CD4-positive, alpha-beta T cell (primary cell): ENCODE measurements at regions of chr16 and their contacts with region 1.

Region 1: GRCh38 chr16:66830422-66831404 is at the start of gene NAE1:
- DNase-seq: peak; percentile 76 to 97 (median 88)
- ATAC-seq: peak; percentile 94
- H3K4me3 ChIP-seq: peak within 1 kb of the TSS; percentile 68
- H3K4me3 Mint-ChIP-seq: peak within 1 kb of the TSS; percentile 84
- H3K27ac ChIP-seq: peak within 1 kb of the TSS in 1 of 2 donors; percentile 55
- H3K27ac Mint-ChIP-seq: peak within 1 kb of the TSS; percentile 67
- H3K4me1 ChIP-seq: peaks cover 32% of the 10 kb centered on the region
- H3K4me1 Mint-ChIP-seq: peaks cover 38% of the 10 kb centered on the region
- H3K27me3 ChIP-seq: peaks cover 0 to 4% of the 10 kb centered on the region in 2 experiments
- H3K27me3 Mint-ChIP-seq: no peaks in the 10 kb centered on the region
- CTCF ChIP-seq: peak; percentile 98
- total RNA-seq, gene NAE1: 89.1 to 91.2 TPM

Region 2: GRCh38 chr16:66103211-66103610 is 727.5 kb before region 1 on chr16:
- CTCF ChIA-PET with region 1: no interaction called
- POLR2A ChIA-PET with region 1: no interaction called
- intact Hi-C with region 1: no loop called
- DNase-seq: no peak
- ATAC-seq: no peak
- H3K4me3 ChIP-seq: no peak overlapping the region
- H3K4me3 Mint-ChIP-seq: no peak overlapping the region
- H3K27ac ChIP-seq: no peak overlapping the region
- H3K27ac Mint-ChIP-seq: no peak overlapping the region
- H3K4me1 ChIP-seq: no peaks in the 10 kb centered on the region
- H3K4me1 Mint-ChIP-seq: no peaks in the 10 kb centered on the region
- H3K27me3 ChIP-seq: no peaks in the 10 kb centered on the region
- H3K27me3 Mint-ChIP-seq: peaks cover 21% of the 10 kb centered on the region
- CTCF ChIP-seq: no peak

Region 3: DNA sequence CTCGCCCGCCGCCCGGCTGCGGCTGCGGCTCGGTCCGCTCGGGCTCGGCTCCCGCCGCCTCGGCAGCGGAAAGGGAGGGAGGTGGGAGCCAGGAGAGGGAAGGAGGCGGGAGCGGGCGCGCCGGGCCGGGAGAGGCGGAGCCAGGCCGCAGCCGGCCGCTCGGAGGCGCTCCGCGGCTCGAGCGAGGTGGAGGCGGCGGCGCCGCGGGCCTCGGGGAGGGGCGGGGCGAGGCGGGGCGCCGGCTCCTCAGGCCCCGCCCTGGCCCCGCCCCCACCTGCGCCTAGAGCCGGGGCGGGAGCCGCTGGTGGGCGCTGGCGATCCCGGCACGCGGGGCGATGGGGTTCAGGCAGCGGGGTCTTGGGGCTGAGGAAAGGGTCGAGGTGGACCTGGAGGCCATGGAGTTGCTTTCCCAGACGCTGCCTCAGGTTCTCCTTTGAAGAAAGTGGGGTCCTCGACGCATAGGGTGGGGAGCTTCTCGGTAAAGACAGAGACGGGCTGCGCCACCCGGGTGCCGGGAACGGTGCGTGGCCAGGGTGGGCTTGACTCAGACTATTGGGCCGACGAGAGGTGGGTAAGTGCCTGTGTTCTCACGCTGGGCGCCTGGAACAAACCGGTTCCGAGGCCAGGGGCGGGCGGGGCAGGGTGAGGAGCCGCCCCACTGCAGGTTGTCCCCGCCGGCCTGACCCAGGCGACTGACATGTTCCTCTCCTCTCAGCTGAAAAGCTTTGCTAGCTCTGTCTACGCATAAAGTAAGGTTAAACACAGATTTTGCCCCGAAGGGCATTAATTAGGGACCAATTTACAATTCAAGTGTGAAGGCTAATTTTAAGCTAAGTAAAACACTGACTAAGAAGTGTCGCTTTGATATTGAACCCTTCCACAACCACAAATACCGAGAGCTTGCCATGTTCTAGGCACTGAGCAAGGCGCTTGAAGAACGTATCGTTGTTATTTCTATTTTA is 133.8 kb before region 1 on chr16 and contains the start of gene CMTM4:
- CTCF ChIA-PET with region 1: interaction called, 4 read pairs
- POLR2A ChIA-PET with region 1: no interaction called
- intact Hi-C with region 1: loop called in 1 of 2 experiments (anchors 2 kb)
- DNase-seq: peak; percentile 42 to 92 (median 72)
- ATAC-seq: peak; percentile 95
- H3K4me3 ChIP-seq: peak within 1 kb of the TSS; percentile 73
- H3K4me3 Mint-ChIP-seq: peak within 1 kb of the TSS; percentile 90
- H3K27ac ChIP-seq: no peak within 1 kb of the TSS
- H3K27ac Mint-ChIP-seq: peak within 1 kb of the TSS; percentile 63
- H3K4me1 ChIP-seq: peaks cover 16% of the 10 kb centered on the region
- H3K4me1 Mint-ChIP-seq: peaks cover 14% of the 10 kb centered on the region
- H3K27me3 ChIP-seq: peaks cover 0 to 4% of the 10 kb centered on the region in 2 experiments
- H3K27me3 Mint-ChIP-seq: peaks cover 4% of the 10 kb centered on the region
- CTCF ChIP-seq: no peak
- total RNA-seq, gene CMTM4: 1.1 to 1.6 TPM

Region 4: DNA sequence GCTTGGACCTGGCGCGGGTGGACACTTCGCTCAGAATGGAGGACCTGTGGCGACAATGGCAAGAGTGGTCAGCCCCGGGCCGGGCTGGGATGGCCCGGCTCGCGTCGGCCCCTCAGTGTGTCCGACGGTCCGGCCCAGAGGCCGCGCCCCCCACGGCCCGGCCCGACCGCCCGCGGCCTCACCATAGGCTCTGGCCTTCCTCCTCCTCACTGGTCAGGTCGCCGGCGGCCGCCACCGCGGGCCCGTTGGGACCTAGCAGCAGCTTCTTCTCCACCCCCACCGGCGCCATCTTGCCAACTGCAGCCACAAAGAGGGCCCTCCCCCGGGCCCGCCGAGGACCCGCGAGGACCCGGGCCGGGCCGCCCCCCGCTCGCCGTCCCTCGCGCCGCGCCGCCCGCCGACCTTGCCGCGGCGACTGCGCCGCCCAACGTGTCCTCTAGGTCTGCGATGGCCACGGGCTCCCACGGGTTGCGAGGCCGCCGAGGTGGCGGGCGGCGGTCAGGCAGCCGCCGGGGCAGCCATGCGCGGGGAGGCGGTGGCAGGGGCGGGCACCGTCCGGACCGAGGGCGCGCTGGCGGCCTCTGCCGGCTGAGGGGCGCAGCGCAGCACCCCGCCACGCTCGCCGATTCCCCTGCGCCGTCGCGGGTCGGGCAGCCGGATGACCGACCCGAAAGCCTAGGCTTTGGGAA is 79.3 kb before region 1 on chr16 and contains the start of gene DYNC1LI2:
- CTCF ChIA-PET with region 1: interaction called, 9 read pairs
- POLR2A ChIA-PET with region 1: interaction called, 13 read pairs
- intact Hi-C with region 1: loop called in 1 of 2 experiments (anchors 2 kb)
- DNase-seq: peak; percentile 66 to 92 (median 78)
- ATAC-seq: peak; percentile 94
- H3K4me3 ChIP-seq: peak within 1 kb of the TSS; percentile 81
- H3K4me3 Mint-ChIP-seq: peak within 1 kb of the TSS; percentile 94
- H3K27ac ChIP-seq: peak within 1 kb of the TSS in 1 of 2 donors; percentile 66
- H3K27ac Mint-ChIP-seq: peak within 1 kb of the TSS; percentile 91
- H3K4me1 ChIP-seq: peaks cover 32% of the 10 kb centered on the region
- H3K4me1 Mint-ChIP-seq: peaks cover 37% of the 10 kb centered on the region
- H3K27me3 ChIP-seq: no peaks in the 10 kb centered on the region
- H3K27me3 Mint-ChIP-seq: peaks cover 19% of the 10 kb centered on the region
- CTCF ChIP-seq: peak; percentile 67
- total RNA-seq, gene DYNC1LI2: 81.8 to 82.4 TPM

Region 5: GRCh38 chr16:66811043-66811442 is 19.7 kb before region 1 on chr16:
- CTCF ChIA-PET with region 1: interaction called, 10 read pairs
- POLR2A ChIA-PET with region 1: interaction called, 4 read pairs
- intact Hi-C with region 1: no loop called
- DNase-seq: no peak
- ATAC-seq: no peak
- H3K4me3 ChIP-seq: no peak overlapping the region
- H3K4me3 Mint-ChIP-seq: no peak overlapping the region
- H3K27ac ChIP-seq: no peak overlapping the region
- H3K27ac Mint-ChIP-seq: no peak overlapping the region
- H3K4me1 ChIP-seq: no peaks in the 10 kb centered on the region
- H3K4me1 Mint-ChIP-seq: no peaks in the 10 kb centered on the region
- H3K27me3 ChIP-seq: no peaks in the 10 kb centered on the region
- H3K27me3 Mint-ChIP-seq: no peaks in the 10 kb centered on the region
- CTCF ChIP-seq: no peak

Region 6: DNA sequence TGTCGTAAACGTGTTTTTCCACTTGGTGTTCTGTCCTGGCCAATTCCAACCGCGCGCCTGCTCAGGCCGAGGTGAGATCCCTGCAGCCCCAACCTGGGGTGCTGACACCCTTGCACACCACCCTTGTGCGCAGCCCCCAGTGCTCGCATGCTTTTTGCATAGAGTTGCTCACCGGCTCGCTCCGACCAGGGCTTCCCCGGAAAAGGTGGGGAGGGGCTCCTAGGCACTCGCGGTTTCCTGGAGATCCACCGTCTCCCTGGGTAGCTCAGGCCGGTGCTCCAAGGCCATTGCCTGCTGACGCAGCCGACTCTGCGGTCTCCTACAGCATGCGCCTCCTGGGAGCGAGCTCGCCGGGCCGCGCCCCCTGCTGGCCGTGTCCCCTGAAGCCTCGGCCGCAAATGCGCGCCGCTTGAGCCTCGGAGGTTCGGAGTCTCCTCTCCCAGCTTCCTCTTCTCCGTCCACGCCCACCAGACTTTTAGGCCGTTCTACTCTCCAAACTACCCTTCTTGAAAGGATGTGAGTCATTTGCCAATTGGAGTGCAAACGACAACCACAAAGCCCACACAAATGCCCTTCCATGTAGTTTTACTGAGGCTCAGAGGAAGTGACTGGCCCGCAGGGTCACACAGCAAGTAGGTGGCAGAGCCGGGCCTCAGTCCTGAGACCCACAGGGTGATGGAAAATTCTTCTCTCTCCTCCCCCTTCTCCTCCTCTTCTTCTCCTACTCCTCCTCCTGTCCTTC is 42.4 kb after region 1 on chr16:
- CTCF ChIA-PET with region 1: interaction called, 49 read pairs
- POLR2A ChIA-PET with region 1: interaction called, 32 read pairs
- intact Hi-C with region 1: loop called (anchors 2 kb)
- DNase-seq: peak; percentile 75 to 94 (median 82)
- ATAC-seq: peak; percentile 90
- H3K4me3 ChIP-seq: peak overlapping the region; percentile 57
- H3K4me3 Mint-ChIP-seq: peak overlapping the region; percentile 75
- H3K27ac ChIP-seq: peak overlapping the region in 1 of 2 donors; percentile 24
- H3K27ac Mint-ChIP-seq: peak overlapping the region; percentile 32
- H3K4me1 ChIP-seq: peaks cover 26% of the 10 kb centered on the region
- H3K4me1 Mint-ChIP-seq: peaks cover 21% of the 10 kb centered on the region
- H3K27me3 ChIP-seq: no peaks in the 10 kb centered on the region
- H3K27me3 Mint-ChIP-seq: no peaks in the 10 kb centered on the region
- CTCF ChIP-seq: peak; percentile 92

Region 7: GRCh38 chr16:66880288-66881013 is 49.7 kb after region 1 on chr16 and contains the start of gene PDP2:
- CTCF ChIA-PET with region 1: interaction called, 39 read pairs
- POLR2A ChIA-PET with region 1: interaction called, 27 read pairs
- intact Hi-C with region 1: no loop called
- DNase-seq: peak; percentile 74 to 95 (median 86)
- ATAC-seq: peak; percentile 98
- H3K4me3 ChIP-seq: peak within 1 kb of the TSS; percentile 93
- H3K4me3 Mint-ChIP-seq: peak within 1 kb of the TSS; percentile 100
- H3K27ac ChIP-seq: no peak within 1 kb of the TSS
- H3K27ac Mint-ChIP-seq: peak within 1 kb of the TSS; percentile 75
- H3K4me1 ChIP-seq: peaks cover 32% of the 10 kb centered on the region
- H3K4me1 Mint-ChIP-seq: peaks cover 33% of the 10 kb centered on the region
- H3K27me3 ChIP-seq: no peaks in the 10 kb centered on the region
- H3K27me3 Mint-ChIP-seq: no peaks in the 10 kb centered on the region
- CTCF ChIP-seq: no peak
- total RNA-seq, gene PDP2: 3.3 to 5.9 TPM